T-cell (primary cell): ENCODE measurements at regions of chr5 and their contacts with region 1.

Region 1: GRCh38 chr5:151284392-151284967 is 19.1 kb downstream of the SLC36A3 start:
- DNase-seq: peak in 1 of 35 experiments; percentile 11
- ATAC-seq: no peak
- H3K4me3 ChIP-seq: no peak overlapping the region
- H3K4me3 Mint-ChIP-seq: no peak overlapping the region
- H3K27ac ChIP-seq: no peak overlapping the region
- H3K27ac Mint-ChIP-seq: no peak overlapping the region
- H3K4me1 ChIP-seq: no peaks in the 10 kb centered on the region
- H3K4me1 Mint-ChIP-seq: peaks cover 0 to 2% (median 0%) of the 10 kb centered on the region in 3 donors
- H3K27me3 ChIP-seq: no peaks in the 10 kb centered on the region
- H3K27me3 Mint-ChIP-seq: no peaks in the 10 kb centered on the region

Region 2: DNA sequence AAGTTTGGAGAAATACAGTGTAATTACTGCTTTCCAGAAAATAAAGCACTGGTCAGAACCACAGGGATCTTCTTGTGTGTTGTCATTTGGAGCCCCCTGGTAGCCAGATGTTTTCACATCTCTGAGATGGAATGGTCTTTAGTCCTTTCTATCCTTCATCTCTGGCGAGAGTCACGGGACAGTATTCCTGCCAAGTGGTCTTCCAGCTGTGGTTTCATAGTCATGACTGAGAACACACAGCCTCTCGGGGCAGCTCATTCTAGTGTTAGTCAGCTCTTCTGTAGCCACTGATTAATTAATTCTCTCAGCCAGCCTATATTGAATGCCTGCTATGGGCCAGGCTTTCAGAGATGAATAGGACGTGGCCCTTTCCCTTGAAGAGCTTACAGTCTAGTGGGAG is 1249.8 kb before region 1 on chr5:
- CTCF ChIA-PET with region 1: no interaction called
- POLR2A ChIA-PET with region 1: interaction called in 1 of 2 experiments, 18 read pairs
- DNase-seq: no peak
- ATAC-seq: no peak
- H3K4me3 ChIP-seq: no peak overlapping the region
- H3K4me3 Mint-ChIP-seq: no peak overlapping the region
- H3K27ac ChIP-seq: no peak overlapping the region
- H3K27ac Mint-ChIP-seq: no peak overlapping the region
- H3K4me1 ChIP-seq: no peaks in the 10 kb centered on the region
- H3K4me1 Mint-ChIP-seq: peaks cover 0 to 5% (median 2%) of the 10 kb centered on the region in 3 donors
- H3K27me3 ChIP-seq: no peaks in the 10 kb centered on the region
- H3K27me3 Mint-ChIP-seq: no peaks in the 10 kb centered on the region

Region 3: DNA sequence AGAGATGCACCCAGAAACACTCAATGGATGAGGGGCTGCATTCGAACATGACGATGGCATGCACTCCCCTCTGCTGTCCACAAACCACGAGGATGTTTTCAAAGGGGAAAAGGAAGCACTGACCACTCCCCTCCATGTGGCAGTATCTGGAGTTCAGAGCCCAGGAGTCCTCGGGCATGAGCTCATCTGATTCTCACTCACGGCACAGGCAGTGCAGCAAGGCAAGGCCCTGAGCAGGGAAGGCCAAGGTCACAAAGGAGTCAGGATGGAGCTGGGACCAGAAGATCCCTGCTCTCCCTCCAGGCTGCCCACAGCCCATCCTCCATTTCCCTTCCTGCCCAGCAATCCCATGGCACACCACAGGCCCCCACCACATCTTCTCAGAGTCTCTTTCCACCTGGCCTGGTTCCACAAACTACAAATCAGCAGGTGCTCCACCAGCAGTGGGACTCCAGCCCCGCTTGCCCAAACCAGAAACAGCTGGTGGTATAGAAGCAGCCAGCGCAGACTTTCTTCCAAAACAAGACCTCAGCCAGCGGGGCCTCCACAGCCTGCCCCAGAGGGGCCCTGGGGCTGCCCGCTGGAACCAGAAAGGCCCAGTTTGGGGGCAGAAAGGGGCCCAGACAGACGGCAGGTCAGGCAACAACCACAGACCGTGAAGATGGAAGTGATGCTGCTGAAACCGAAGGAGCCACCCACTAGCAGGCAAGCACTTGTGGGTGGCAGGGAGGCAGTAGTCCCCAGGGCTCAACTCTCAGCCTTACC is 215.9 kb before region 1 on chr5:
- CTCF ChIA-PET with region 1: no interaction called
- POLR2A ChIA-PET with region 1: no interaction called
- DNase-seq: peak in 1 of 35 experiments; percentile 25
- ATAC-seq: peak in 3 of 4 experiments; percentile 35 to 46 (median 42)
- H3K4me3 ChIP-seq: no peak overlapping the region
- H3K4me3 Mint-ChIP-seq: peak overlapping the region in 1 of 3 donors; percentile 24
- H3K27ac ChIP-seq: no peak overlapping the region
- H3K27ac Mint-ChIP-seq: peak overlapping the region; percentile 69 to 77
- H3K4me1 ChIP-seq: peaks cover 3 to 73% of the 10 kb centered on the region in 2 experiments
- H3K4me1 Mint-ChIP-seq: peaks cover 72 to 83% (median 77%) of the 10 kb centered on the region in 3 donors
- H3K27me3 ChIP-seq: no peaks in the 10 kb centered on the region
- H3K27me3 Mint-ChIP-seq: no peaks in the 10 kb centered on the region

Region 4: DNA sequence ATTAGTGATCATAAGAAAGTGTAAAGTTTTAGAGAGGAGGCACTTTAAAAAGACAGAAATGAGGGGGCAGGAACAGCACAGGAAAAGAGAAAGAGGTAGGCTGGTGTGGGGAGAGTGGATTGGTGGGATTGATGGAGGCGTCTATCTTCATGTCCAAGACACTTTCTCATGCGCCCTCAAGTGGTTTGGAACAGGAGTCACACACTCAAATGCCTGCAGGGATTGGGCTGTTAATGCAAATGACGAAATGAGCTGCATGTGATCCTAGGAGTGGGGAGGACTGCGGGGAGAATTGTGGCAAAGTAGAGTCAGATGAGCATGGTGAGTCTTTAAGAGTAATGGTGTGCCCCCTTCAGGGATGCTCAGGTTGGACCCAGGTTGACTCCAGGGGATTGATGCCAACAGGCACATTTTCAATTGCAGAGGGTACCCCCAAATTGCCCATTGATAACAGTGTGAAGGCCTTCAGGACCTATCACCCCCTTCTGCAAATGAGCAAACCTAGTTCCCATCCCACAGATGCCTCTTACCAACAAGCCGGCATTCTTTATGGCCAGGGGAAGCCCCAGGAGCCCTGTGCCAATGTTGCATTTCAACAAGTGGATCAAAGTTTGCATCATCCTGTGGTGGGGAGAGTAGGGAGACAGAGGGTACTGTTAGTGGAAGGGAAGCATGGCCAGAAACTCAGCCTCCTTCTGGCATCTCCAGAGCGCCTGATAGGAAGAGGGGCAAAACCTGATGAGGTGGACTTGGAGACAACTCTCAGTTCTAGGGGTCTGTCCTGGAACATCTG is 13.8 kb after region 1 on chr5:
- CTCF ChIA-PET with region 1: no interaction called
- POLR2A ChIA-PET with region 1: no interaction called
- DNase-seq: peak in 3 of 35 experiments; percentile 10 to 25 (median 13)
- ATAC-seq: peak in 1 of 4 experiments; percentile 73
- H3K4me3 ChIP-seq: no peak overlapping the region
- H3K4me3 Mint-ChIP-seq: no peak overlapping the region
- H3K27ac ChIP-seq: no peak overlapping the region
- H3K27ac Mint-ChIP-seq: no peak overlapping the region
- H3K4me1 ChIP-seq: no peaks in the 10 kb centered on the region
- H3K4me1 Mint-ChIP-seq: peaks cover 0 to 10% (median 0%) of the 10 kb centered on the region in 3 donors
- H3K27me3 ChIP-seq: peaks cover 0 to 16% of the 10 kb centered on the region in 2 experiments
- H3K27me3 Mint-ChIP-seq: peaks cover 7 to 16% of the 10 kb centered on the region in 2 donors